ENCODE measurements at regions of chr6 and their contacts with region 1.

Region 1: GRCh38 chr6:129661536-129662405 is 48.2 kb downstream of the ARHGAP18 start:
- DNase-seq: no peak
- H3K4me3 ChIP-seq: no peak overlapping the region
- H3K27ac ChIP-seq: no peak overlapping the region
- H3K4me1 ChIP-seq: peaks cover 4% of the 10 kb centered on the region
- H3K27me3 ChIP-seq: no peaks in the 10 kb centered on the region
- CTCF ChIP-seq: no peak

Region 2: GRCh38 chr6:129393654-129394053 is 268.1 kb before region 1 on chr6:
- CTCF ChIA-PET with region 1: no interaction called
- dilution Hi-C with region 1: no loop called
- in situ Hi-C with region 1: no loop called
- intact Hi-C with region 1: no loop called
- DNase-seq: no peak
- H3K4me3 ChIP-seq: no peak overlapping the region
- H3K27ac ChIP-seq: no peak overlapping the region
- H3K4me1 ChIP-seq: no peaks in the 10 kb centered on the region
- H3K27me3 ChIP-seq: no peaks in the 10 kb centered on the region
- CTCF ChIP-seq: no peak

Region 3: GRCh38 chr6:129603741-129604140 is 58.0 kb before region 1 on chr6:
- CTCF ChIA-PET with region 1: no interaction called
- dilution Hi-C with region 1: loop called (anchors 5 kb)
- in situ Hi-C with region 1: no loop called
- intact Hi-C with region 1: no loop called
- DNase-seq: no peak
- H3K4me3 ChIP-seq: no peak overlapping the region
- H3K27ac ChIP-seq: no peak overlapping the region
- H3K4me1 ChIP-seq: peaks cover 3% of the 10 kb centered on the region
- H3K27me3 ChIP-seq: no peaks in the 10 kb centered on the region
- CTCF ChIP-seq: no peak